Esophagus squamous epithelium (tissue), 5 donors: ENCODE measurements at regions of chr1 and their contacts with region 1.

Region 1: DNA sequence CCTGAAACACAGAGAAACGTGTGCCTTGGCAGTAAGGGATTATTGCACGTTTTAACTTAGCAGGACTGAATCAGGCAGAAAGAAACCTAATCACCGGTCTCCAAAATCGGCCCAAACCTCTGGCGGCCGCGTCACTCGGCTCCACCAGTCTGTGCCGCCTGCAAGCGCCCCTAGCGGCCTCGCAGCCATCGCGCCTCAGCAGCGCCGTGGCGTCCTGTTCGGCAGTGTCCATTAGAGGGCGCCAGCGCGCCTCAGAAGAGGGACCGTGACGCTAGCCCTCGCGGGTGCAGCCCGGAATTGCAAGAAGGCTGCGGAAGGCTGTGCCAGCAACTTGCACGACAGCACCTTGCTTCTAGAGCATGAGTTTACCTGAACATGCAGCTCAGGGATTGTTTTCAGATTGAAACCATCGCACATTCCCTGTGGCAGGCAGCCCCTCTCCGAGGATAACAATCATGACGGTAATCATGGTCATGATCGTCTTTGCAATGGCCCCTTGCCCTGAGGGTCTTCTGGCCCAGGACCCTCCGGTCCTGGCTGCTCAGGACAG is 164.4 kb downstream of the TRIM33 start:
- DNase-seq: peak; percentile 67
- H3K4me3 ChIP-seq: peak overlapping the region; percentile 32 to 73 (median 59)
- H3K27ac ChIP-seq: peak overlapping the region; percentile 73 to 90 (median 88)
- H3K4me1 ChIP-seq: peaks cover 4 to 30% (median 10%) of the 10 kb centered on the region in 3 donors
- H3K27me3 ChIP-seq: no peaks in the 10 kb centered on the region
- CTCF ChIP-seq: peak; percentile 99 to 100 (median 100)
- POLR2A ChIP-seq: peak in 1 of 4 donors; percentile 17

Region 2: GRCh38 chr1:114105421-114105979 is 241.1 kb before region 1 on chr1:
- intact Hi-C with region 1: no loop called
- DNase-seq: no peak
- H3K4me3 ChIP-seq: no peak overlapping the region
- H3K27ac ChIP-seq: no peak overlapping the region
- H3K4me1 ChIP-seq: no peaks in the 10 kb centered on the region
- H3K27me3 ChIP-seq: peaks cover 0 to 22% (median 0%) of the 10 kb centered on the region in 4 donors
- CTCF ChIP-seq: no peak
- POLR2A ChIP-seq: no peak

Region 3: DNA sequence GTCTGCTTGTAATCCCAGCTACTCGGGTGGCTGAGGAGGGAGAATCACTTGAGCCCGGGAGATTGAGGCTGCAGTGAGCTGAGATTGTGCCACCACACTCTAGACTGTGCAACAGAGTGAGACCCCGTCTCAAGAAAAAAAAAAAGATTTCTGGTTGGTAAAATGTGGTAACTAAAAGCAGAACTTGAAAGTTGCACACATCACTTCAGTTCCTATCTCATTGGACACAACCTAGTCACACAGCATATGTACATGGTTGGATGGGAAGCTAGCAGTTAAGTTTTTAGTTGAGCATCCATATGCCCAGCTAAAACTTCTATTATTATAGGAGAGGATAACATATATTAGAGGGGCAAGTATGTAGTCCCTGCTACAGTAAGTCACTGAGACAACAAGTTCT is 212.8 kb after region 1 on chr1:
- intact Hi-C with region 1: no loop called
- DNase-seq: no peak
- H3K4me3 ChIP-seq: no peak overlapping the region
- H3K27ac ChIP-seq: no peak overlapping the region
- H3K4me1 ChIP-seq: peaks cover 0 to 12% (median 0%) of the 10 kb centered on the region in 3 donors
- H3K27me3 ChIP-seq: no peaks in the 10 kb centered on the region
- CTCF ChIP-seq: no peak
- POLR2A ChIP-seq: no peak

Region 4: DNA sequence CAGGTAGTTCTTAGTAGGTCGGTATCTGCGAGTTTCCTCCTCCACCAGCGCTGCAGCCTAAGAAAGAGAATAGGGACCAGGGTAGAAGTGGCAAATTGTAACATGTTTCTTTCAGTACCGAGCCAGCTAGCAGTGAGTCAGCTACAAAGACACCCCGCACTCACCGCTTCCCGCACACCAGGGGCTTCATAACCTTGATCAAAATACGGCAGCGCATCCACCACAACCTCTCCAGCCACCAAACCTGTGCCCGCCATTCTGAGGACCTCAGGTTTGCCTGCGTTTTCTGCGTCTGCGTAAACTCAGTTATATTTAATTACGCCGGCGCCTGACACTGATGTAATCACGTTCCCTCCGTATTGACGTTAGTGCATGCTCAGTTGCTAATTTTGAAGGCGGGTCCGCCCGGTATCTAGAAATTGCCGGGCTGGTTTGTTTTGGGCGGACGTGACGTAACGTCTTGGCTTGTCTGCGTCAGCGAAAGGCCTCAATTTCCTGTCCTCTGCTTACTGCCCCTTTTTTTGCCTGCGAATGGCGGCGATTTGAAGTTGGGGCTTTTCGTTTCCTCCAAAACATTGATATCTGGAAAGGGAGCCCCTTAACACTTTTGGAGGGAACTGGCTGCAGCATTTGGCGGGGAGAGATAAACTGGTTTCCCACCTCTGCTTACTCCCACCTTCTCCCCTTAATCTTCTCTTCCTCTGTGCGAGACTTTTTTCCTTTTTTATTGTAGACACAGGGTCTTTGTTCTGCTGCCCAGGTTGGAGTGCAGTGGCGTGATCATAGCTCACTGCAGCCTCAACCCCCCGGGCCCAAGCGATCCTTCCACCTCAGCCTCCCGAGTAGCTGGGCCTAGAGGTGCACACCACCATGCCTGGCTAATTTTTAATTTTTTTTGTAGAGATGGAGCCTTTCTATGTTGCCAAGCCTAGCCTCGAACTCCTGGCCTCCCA is 235.1 kb after region 1 on chr1 and contains the start of gene BCAS2:
- intact Hi-C with region 1: loop called (anchors 5 kb)
- DNase-seq: peak; percentile 91
- H3K4me3 ChIP-seq: peak within 1 kb of the TSS; percentile 45 to 74 (median 66)
- H3K27ac ChIP-seq: peak within 1 kb of the TSS; percentile 89 to 97 (median 94)
- H3K4me1 ChIP-seq: peaks cover 9 to 44% (median 11%) of the 10 kb centered on the region in 3 donors
- H3K27me3 ChIP-seq: no peaks in the 10 kb centered on the region
- CTCF ChIP-seq: peak in 3 of 6 experiments; percentile 6 to 16 (median 10)
- POLR2A ChIP-seq: peak in 3 of 4 donors; percentile 93 to 94 (median 93)
- total RNA-seq, gene BCAS2: 24.8 to 38.9 (median 32.7) TPM